GM12878 (cell line): ENCODE measurements at regions of chr10 and their contacts with region 1.

Region 1: GRCh38 chr10:62816331-62817120 is at the start of gene EGR2:
- DNase-seq: peak; percentile 92
- ATAC-seq: peak; percentile 78
- H3K4me3 ChIP-seq: peak within 1 kb of the TSS; percentile 72
- H3K27ac ChIP-seq: peak within 1 kb of the TSS; percentile 72
- H3K4me1 ChIP-seq: peaks cover 19% of the 10 kb centered on the region
- H3K27me3 ChIP-seq: peaks cover 1 to 8% of the 10 kb centered on the region in 2 experiments; a peak in 3 of 4 replicates
- CTCF ChIP-seq: no peak
- EP300 ChIP-seq: peak in 1 of 2 experiments; percentile 56; a peak in 3 of 4 replicates
- POLR2A ChIP-seq: peak; percentile 44
- RAD21 ChIP-seq: no peak
- polyA plus RNA-seq, gene EGR2: 8.3 to 14.0 TPM

Region 2: GRCh38 chr10:62492012-62492869 is 324.3 kb before region 1 on chr10:
- CTCF ChIA-PET with region 1: interaction called, 8 read pairs
- POLR2A ChIA-PET with region 1: no interaction called
- RAD21 ChIA-PET with region 1: interaction called, 5 read pairs
- SMC1A ChIA-PET with region 1: interaction called, 11 read pairs
- in situ Hi-C with region 1: no loop called
- intact Hi-C with region 1: no loop called
- DNase-seq: peak; percentile 25
- ATAC-seq: peak; percentile 75
- H3K4me3 ChIP-seq: no peak overlapping the region
- H3K27ac ChIP-seq: no peak overlapping the region
- H3K4me1 ChIP-seq: no peaks in the 10 kb centered on the region
- H3K27me3 ChIP-seq: no peaks in the 10 kb centered on the region; a peak in 1 of 4 replicates
- CTCF ChIP-seq: peak; percentile 56 to 71 (median 71); a peak in 5 of 6 replicates
- EP300 ChIP-seq: no peak
- POLR2A ChIP-seq: no peak
- RAD21 ChIP-seq: peak; percentile 94

Region 3: GRCh38 chr10:62517252-62517651 is 299.3 kb before region 1 on chr10:
- CTCF ChIA-PET with region 1: no interaction called
- POLR2A ChIA-PET with region 1: no interaction called
- RAD21 ChIA-PET with region 1: no interaction called
- SMC1A ChIA-PET with region 1: no interaction called
- in situ Hi-C with region 1: no loop called
- intact Hi-C with region 1: no loop called
- DNase-seq: no peak
- ATAC-seq: no peak
- H3K4me3 ChIP-seq: no peak overlapping the region
- H3K27ac ChIP-seq: no peak overlapping the region
- H3K4me1 ChIP-seq: no peaks in the 10 kb centered on the region
- H3K27me3 ChIP-seq: no peaks in the 10 kb centered on the region
- CTCF ChIP-seq: no peak
- EP300 ChIP-seq: no peak
- POLR2A ChIP-seq: no peak
- RAD21 ChIP-seq: no peak

Region 4: GRCh38 chr10:62632071-62632809 is 184.3 kb before region 1 on chr10:
- CTCF ChIA-PET with region 1: interaction called, 10 read pairs
- POLR2A ChIA-PET with region 1: interaction called, 7 read pairs
- RAD21 ChIA-PET with region 1: interaction called, 64 read pairs
- SMC1A ChIA-PET with region 1: interaction called, 82 read pairs
- in situ Hi-C with region 1: no loop called
- intact Hi-C with region 1: loop called (anchors 1 kb)
- DNase-seq: peak; percentile 80
- ATAC-seq: peak; percentile 85
- H3K4me3 ChIP-seq: 0 out of 2 replicates have a peak overlapping the region, but pooled peaks have one; percentile 1
- H3K27ac ChIP-seq: peak overlapping the region; percentile 71
- H3K4me1 ChIP-seq: peaks cover 56% of the 10 kb centered on the region
- H3K27me3 ChIP-seq: no peaks in the 10 kb centered on the region
- CTCF ChIP-seq: no peak
- EP300 ChIP-seq: peak; percentile 75 to 94
- POLR2A ChIP-seq: no peak
- RAD21 ChIP-seq: peak; percentile 29; the same call in 1 of the 2 replicates

Region 5: DNA sequence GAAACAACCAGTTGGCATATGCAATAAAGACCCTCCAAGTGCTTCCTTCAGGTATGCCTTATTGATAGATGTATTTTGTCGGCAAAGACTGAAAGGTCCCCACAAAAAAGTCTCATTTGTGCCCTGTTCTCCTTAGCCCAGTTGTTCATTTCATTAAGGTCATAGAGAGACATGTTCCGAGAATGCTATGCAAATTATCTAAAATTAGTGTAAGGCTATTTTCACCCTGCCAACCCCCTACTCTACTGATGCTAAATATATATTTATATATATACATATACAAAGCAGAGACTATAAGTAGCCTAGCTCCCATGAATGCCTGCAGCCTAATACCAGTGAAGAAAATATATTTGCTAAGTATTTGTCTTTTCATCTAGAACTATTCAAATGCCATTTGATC is 108.7 kb before region 1 on chr10:
- CTCF ChIA-PET with region 1: interaction called, 6 read pairs
- POLR2A ChIA-PET with region 1: interaction called, 4 read pairs
- RAD21 ChIA-PET with region 1: interaction called, 11 read pairs
- SMC1A ChIA-PET with region 1: interaction called, 5 read pairs
- in situ Hi-C with region 1: no loop called
- intact Hi-C with region 1: no loop called
- DNase-seq: peak; percentile 40
- ATAC-seq: peak; percentile 76
- H3K4me3 ChIP-seq: peak overlapping the region; percentile 9; the same call in 1 of the 2 replicates
- H3K27ac ChIP-seq: peak overlapping the region; percentile 61; the same call in 1 of the 2 replicates
- H3K4me1 ChIP-seq: peaks cover 30% of the 10 kb centered on the region
- H3K27me3 ChIP-seq: no peaks in the 10 kb centered on the region
- CTCF ChIP-seq: no peak
- EP300 ChIP-seq: peak; percentile 9 to 76; a peak in 2 of 4 replicates
- POLR2A ChIP-seq: no peak
- RAD21 ChIP-seq: 0 out of 2 replicates have a peak, but pooled peaks have one; percentile 20

Region 6: DNA sequence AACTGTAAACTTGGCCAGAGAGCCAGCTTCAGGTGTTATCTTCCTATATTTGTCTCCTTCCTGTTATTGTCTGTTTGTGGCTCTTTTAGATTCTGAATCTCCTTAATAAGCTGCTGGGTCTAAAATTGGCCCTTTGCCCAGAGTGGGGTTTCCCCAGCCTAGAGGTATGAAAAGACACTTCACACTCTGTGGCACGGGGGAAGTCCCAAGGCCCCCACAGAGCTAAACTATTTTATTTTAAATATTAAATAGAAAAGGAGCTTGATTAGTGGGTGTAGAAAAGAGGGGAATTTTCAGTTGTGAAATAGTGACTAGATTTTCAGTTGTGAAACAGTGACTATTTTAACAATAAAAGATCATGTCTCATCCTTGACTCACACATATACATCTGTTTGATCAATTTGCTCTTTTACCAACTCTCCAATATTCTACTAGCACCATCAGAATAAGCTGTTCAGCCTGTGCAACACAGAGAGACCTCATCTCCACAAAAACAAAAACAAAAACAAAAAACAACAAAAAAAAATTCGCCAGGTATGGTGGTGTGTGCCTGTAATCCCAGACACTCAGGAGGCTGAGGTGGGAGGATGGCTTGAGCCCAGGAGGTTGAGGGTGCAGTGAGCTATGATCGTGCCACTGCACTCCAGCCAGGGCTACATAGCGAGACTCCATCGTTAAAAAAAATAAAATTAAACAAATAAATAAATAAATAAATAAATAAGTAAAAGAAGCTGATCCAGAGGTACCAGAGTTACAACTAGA is 36.9 kb before region 1 on chr10:
- CTCF ChIA-PET with region 1: interaction called, 11 read pairs
- POLR2A ChIA-PET with region 1: interaction called, 12 read pairs
- RAD21 ChIA-PET with region 1: interaction called, 61 read pairs
- SMC1A ChIA-PET with region 1: interaction called, 54 read pairs
- in situ Hi-C with region 1: no loop called
- intact Hi-C with region 1: loop called (anchors 2 kb)
- DNase-seq: peak; percentile 84
- ATAC-seq: peak; percentile 96
- H3K4me3 ChIP-seq: no peak overlapping the region
- H3K27ac ChIP-seq: peak overlapping the region; percentile 75; the same call in 1 of the 2 replicates
- H3K4me1 ChIP-seq: peaks cover 23% of the 10 kb centered on the region
- H3K27me3 ChIP-seq: no peaks in the 10 kb centered on the region
- CTCF ChIP-seq: no peak
- EP300 ChIP-seq: peak; percentile 83 to 84
- POLR2A ChIP-seq: no peak
- RAD21 ChIP-seq: no peak

Region 7: GRCh38 chr10:62934258-62934657 is 117.7 kb after region 1 on chr10:
- CTCF ChIA-PET with region 1: no interaction called
- POLR2A ChIA-PET with region 1: no interaction called
- RAD21 ChIA-PET with region 1: no interaction called
- SMC1A ChIA-PET with region 1: no interaction called
- in situ Hi-C with region 1: no loop called
- intact Hi-C with region 1: no loop called
- DNase-seq: no peak
- ATAC-seq: no peak
- H3K4me3 ChIP-seq: no peak overlapping the region
- H3K27ac ChIP-seq: no peak overlapping the region
- H3K4me1 ChIP-seq: no peaks in the 10 kb centered on the region
- H3K27me3 ChIP-seq: no peaks in the 10 kb centered on the region
- CTCF ChIP-seq: no peak
- EP300 ChIP-seq: no peak
- POLR2A ChIP-seq: no peak
- RAD21 ChIP-seq: no peak

Region 8: DNA sequence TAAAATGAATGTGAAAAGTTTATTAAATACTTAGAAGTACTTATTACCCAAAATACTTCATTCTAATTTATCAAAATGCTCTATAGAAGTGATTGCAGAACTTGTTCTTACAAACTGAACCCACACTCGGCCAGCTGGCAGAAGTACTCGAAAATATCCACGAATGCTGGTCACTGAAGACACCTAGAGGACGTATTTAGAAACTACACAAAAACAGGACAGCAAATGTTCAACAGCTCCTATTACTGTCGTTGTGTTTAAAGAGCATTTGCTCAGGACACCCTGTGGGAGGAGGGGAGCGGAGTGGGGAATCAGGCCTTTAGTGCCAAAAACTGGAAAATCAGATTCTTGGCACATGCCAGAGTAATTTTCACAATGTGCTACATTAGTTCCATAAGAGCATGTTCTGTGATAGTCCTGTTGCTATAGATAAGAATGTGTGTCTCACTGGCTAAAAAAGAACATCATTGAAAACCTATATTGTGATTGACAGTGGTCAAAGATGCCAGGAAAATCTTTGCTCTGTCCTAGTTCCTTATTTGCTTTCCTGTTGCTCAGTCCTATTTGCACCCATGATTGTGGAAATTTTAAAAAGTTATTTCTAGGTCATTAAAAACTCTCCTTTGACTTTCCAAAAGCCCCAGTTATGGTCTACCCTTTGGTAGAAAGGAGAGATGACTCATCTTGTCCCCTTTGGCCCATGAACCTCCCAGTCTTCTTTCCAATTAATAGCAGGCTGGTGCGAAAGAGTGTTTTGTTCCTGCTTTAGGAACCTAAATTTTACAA is 267.6 kb after region 1 on chr10:
- CTCF ChIA-PET with region 1: interaction called, 20 read pairs
- POLR2A ChIA-PET with region 1: interaction called, 3 read pairs
- RAD21 ChIA-PET with region 1: interaction called, 23 read pairs
- SMC1A ChIA-PET with region 1: interaction called, 13 read pairs
- in situ Hi-C with region 1: no loop called
- intact Hi-C with region 1: loop called (anchors 2 kb)
- DNase-seq: peak; percentile 38
- ATAC-seq: peak; percentile 94
- H3K4me3 ChIP-seq: no peak overlapping the region
- H3K27ac ChIP-seq: no peak overlapping the region
- H3K4me1 ChIP-seq: no peaks in the 10 kb centered on the region
- H3K27me3 ChIP-seq: no peaks in the 10 kb centered on the region; a peak in 1 of 4 replicates
- CTCF ChIP-seq: peak; percentile 63 to 84 (median 76)
- EP300 ChIP-seq: no peak
- POLR2A ChIP-seq: no peak
- RAD21 ChIP-seq: peak; percentile 99